Activated naive CD4-positive, alpha-beta T cell treated with anti-CD3 and anti-CD28 coated beads, Interleukin-2, amount 10 ng/mL, durations not matched to agents 7 days and 5 days (primary cell): ENCODE measurements at regions of chr9 and their contacts with region 1.

Region 1: GRCh38 chr9:84285381-84285780 is 55.2 kb downstream of the SLC28A3 start:
- DNase-seq: no peak
- H3K4me3 Mint-ChIP-seq: no peak overlapping the region
- H3K27ac Mint-ChIP-seq: peak overlapping the region; percentile 25
- H3K4me1 Mint-ChIP-seq: peaks cover 15% of the 10 kb centered on the region
- H3K27me3 Mint-ChIP-seq: peaks cover 6% of the 10 kb centered on the region

Region 2: DNA sequence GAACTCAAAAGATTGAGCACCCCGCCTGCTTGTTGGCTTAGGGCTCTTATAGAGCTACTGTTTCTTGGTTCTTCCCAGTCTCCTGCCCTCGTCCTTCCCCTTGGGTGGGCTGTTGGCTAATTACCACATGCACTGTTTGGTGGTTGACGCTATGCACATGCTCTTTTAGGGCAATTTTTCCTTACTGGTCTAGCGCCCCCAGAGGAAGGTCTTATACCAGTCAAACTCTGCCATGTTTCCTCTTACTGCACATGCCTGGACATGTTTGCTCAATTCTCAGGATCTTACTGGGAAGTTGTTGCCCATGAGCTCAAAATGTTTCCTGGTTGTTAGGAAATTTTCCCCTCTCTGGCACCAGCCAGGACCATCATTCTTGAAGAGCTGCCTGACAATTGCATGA is 46.7 kb before region 1 on chr9:
- CTCF ChIA-PET with region 1: no interaction called
- DNase-seq: no peak
- H3K4me3 Mint-ChIP-seq: no peak overlapping the region
- H3K27ac Mint-ChIP-seq: no peak overlapping the region
- H3K4me1 Mint-ChIP-seq: no peaks in the 10 kb centered on the region
- H3K27me3 Mint-ChIP-seq: peaks cover 4% of the 10 kb centered on the region

Region 3: GRCh38 chr9:84254972-84255371 is 30.4 kb before region 1 on chr9:
- CTCF ChIA-PET with region 1: no interaction called
- DNase-seq: no peak
- H3K4me3 Mint-ChIP-seq: no peak overlapping the region
- H3K27ac Mint-ChIP-seq: no peak overlapping the region
- H3K4me1 Mint-ChIP-seq: no peaks in the 10 kb centered on the region
- H3K27me3 Mint-ChIP-seq: peaks cover 11% of the 10 kb centered on the region

Region 4: GRCh38 chr9:84271531-84271900 is 13.9 kb before region 1 on chr9:
- CTCF ChIA-PET with region 1: interaction called, 10 read pairs
- DNase-seq: peak; percentile 80
- H3K4me3 Mint-ChIP-seq: peak overlapping the region; percentile 70
- H3K27ac Mint-ChIP-seq: peak overlapping the region; percentile 59
- H3K4me1 Mint-ChIP-seq: peaks cover 24% of the 10 kb centered on the region
- H3K27me3 Mint-ChIP-seq: peaks cover 10% of the 10 kb centered on the region

Region 5: DNA sequence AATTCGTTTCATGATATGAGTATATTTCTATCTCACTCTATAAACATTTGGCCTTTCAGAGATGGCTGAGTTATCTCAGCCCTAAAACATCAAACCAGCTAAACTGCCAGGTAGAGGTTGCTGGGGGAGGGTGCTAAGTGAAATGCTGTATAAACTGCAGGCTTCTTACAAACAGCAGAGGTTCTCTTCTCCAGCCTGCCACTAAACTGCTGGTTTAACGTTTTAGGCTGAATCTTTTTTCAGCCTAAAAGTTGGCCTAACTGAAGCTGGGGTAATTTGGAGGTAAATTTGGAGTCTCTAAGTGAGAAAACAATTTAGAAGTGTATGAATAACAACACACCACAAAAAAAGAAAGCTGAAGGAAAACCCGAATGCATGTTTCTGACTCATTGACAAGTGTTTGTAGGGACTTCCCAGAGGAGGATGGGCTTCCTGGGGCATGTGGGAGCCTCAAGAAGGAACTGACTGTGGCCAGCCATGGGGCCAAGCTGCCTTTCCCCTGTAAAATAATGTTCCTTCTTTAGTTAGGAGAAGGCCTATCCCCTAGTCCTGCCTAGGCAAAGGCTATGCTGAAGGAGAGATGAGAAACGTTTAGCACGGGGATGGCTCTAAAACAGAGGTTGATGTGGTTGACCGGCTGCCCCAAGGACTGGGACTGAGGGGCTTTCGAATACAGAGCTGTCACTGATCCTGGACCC is 10.9 kb after region 1 on chr9:
- CTCF ChIA-PET with region 1: interaction called, 19 read pairs
- DNase-seq: peak; percentile 39
- H3K4me3 Mint-ChIP-seq: no peak overlapping the region
- H3K27ac Mint-ChIP-seq: peak overlapping the region; percentile 90
- H3K4me1 Mint-ChIP-seq: peaks cover 61% of the 10 kb centered on the region
- H3K27me3 Mint-ChIP-seq: no peaks in the 10 kb centered on the region

Region 6: GRCh38 chr9:84880835-84881234 is 595.5 kb after region 1 on chr9:
- CTCF ChIA-PET with region 1: no interaction called
- DNase-seq: no peak
- H3K4me3 Mint-ChIP-seq: no peak overlapping the region
- H3K27ac Mint-ChIP-seq: no peak overlapping the region
- H3K4me1 Mint-ChIP-seq: no peaks in the 10 kb centered on the region
- H3K27me3 Mint-ChIP-seq: no peaks in the 10 kb centered on the region